Gastrocnemius medialis (tissue), 4 donors: ENCODE measurements at regions of chr2 and their contacts with region 1.

Region 1: GRCh38 chr2:64018923-64019718 is at the start of gene VPS54:
- DNase-seq: peak; percentile 17 to 64
- ATAC-seq: peak; percentile 84 to 89
- H3K4me3 ChIP-seq: peak within 1 kb of the TSS; percentile 65 to 85 (median 80)
- H3K27ac ChIP-seq: peak within 1 kb of the TSS; percentile 88 to 96 (median 92)
- H3K4me1 ChIP-seq: peaks cover 34 to 39% of the 10 kb centered on the region in 2 donors
- H3K27me3 ChIP-seq: no peaks in the 10 kb centered on the region
- CTCF ChIP-seq: peak; percentile 15 to 34 (median 25)
- POLR2A ChIP-seq: peak; percentile 66
- total RNA-seq, gene VPS54: 7.9 to 12.4 (median 9.8) TPM

Region 2: GRCh38 chr2:63698825-63699548 is 320.1 kb before region 1 on chr2:
- in situ Hi-C with region 1: no loop called
- intact Hi-C with region 1: no loop called
- DNase-seq: peak; percentile 54 to 63
- ATAC-seq: peak; percentile 89 to 93
- H3K4me3 ChIP-seq: no peak overlapping the region
- H3K27ac ChIP-seq: peak overlapping the region; percentile 38 to 73 (median 58)
- H3K4me1 ChIP-seq: peaks cover 16 to 18% of the 10 kb centered on the region in 2 donors
- H3K27me3 ChIP-seq: no peaks in the 10 kb centered on the region
- CTCF ChIP-seq: peak; percentile 22 to 60 (median 42)
- POLR2A ChIP-seq: no peak

Region 3: GRCh38 chr2:64144057-64145013 is 125.2 kb after region 1 on chr2 and contains the start of gene PELI1:
- in situ Hi-C with region 1: no loop called
- intact Hi-C with region 1: loop called (anchors 1 kb)
- DNase-seq: peak; percentile 94 to 96
- ATAC-seq: peak; percentile 93 to 95
- H3K4me3 ChIP-seq: peak within 1 kb of the TSS; percentile 83 to 100 (median 95)
- H3K27ac ChIP-seq: peak within 1 kb of the TSS; percentile 91 to 99 (median 96)
- H3K4me1 ChIP-seq: peaks cover 3 to 11% of the 10 kb centered on the region in 2 donors
- H3K27me3 ChIP-seq: no peaks in the 10 kb centered on the region
- CTCF ChIP-seq: peak in 2 of 5 experiments; percentile 13 to 30
- POLR2A ChIP-seq: peak; percentile 94 to 97
- total RNA-seq, gene PELI1: 3.7 to 7.5 (median 5.9) TPM

Region 4: GRCh38 chr2:64548761-64549160 is 529.6 kb after region 1 on chr2:
- in situ Hi-C with region 1: no loop called
- intact Hi-C with region 1: no loop called
- DNase-seq: no peak
- ATAC-seq: no peak
- H3K4me3 ChIP-seq: no peak overlapping the region
- H3K27ac ChIP-seq: no peak overlapping the region
- H3K4me1 ChIP-seq: peaks cover 16 to 17% of the 10 kb centered on the region in 2 donors
- H3K27me3 ChIP-seq: no peaks in the 10 kb centered on the region
- CTCF ChIP-seq: no peak
- POLR2A ChIP-seq: no peak